ENCODE measurements at regions of chr19 and their contacts with region 1.

Region 1: DNA sequence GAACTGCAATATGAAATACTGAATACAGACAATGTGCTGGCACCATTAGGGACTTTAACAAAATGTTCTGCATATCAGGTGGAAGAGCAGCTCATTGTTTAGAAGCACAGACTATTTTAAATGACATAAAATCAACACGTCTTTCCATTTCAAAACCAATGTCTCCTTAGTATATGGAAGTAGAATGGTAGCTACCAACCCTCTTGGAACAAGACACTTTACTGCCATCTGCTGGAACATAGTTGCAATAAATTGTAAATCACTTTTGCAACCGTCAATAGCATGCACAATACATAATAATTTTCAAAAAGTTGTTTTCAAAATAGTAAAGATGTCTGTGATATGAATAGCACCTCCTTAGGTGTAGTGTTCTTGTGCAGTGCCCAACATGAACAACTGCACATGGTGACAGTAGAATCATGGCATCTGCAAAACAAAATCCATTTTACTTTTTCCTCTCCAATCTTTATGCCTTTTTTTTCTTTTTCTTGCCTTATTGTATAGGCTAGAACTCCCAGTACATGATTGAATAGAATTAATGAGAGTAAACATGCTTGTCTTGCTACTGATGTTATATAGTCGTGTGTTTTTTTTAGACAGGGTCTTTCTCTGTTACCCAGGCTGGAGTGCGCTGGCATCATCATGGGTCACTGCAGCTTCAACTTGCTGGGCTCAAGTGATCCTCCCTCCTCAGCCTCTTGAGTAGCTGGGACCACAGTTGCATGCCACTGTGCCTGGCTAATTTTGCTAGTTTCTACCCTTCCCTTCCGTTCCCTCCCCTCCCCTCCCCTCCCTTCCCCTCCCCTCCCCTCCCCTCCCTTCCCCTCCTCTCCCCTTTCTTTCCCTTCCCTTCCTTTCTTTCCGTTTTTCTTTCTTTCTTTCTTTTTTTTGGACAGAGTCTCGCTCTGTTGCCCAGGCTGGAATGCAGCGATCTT is 7.8 kb upstream of the LYPD5 start:
- DNase-seq: peak; percentile 74
- ATAC-seq: peak; percentile 85
- H3K4me3 ChIP-seq: no peak overlapping the region
- H3K27ac ChIP-seq: no peak overlapping the region
- H3K4me1 ChIP-seq: no peaks in the 10 kb centered on the region
- H3K27me3 ChIP-seq: peaks cover 10% of the 10 kb centered on the region
- CTCF ChIP-seq: peak; percentile 73
- POLR2A ChIP-seq: no peak
- RAD21 ChIP-seq: peak; percentile 75

Region 2: DNA sequence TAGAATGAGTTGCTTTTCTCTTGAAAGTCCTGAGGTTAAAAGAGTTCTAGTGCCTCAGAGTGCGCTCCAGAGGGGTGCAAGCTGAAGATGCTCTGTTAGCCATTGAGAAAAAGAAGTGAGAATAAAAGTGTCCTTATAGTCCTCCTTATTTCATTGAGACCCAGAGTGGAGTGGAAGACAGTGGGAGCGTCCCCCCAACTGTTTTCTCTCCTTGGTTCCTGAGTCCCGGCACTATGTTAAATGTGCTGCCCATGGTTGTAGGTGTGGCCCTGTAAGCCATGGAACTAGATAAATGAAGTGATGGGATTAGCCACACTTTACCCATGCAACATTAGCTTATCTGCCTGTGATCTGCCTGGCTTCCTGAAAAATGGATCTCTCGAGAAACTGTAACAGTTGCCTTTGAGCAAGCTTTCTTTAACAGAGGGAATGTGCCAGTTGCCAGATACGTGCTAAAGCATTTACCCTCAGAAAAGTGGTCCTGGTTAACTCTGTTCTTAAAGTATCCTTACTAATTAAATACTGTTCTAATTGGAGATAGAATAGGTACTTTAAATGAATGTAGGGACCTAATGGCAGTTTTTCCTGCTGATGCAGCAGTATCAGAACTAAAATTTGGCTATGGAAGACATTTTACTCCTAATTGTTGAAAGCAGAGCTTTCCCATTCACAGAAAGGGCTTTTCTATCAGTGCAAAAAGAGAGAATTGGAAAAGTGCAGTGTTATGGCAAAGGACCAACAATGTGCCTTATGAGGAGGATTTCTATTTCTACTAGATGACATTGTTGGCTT is 519.3 kb before region 1 on chr19:
- CTCF ChIA-PET with region 1: no interaction called
- POLR2A ChIA-PET with region 1: no interaction called
- dilution Hi-C with region 1: no loop called
- in situ Hi-C with region 1: no loop called
- intact Hi-C with region 1: loop called (anchors 5 kb)
- DNase-seq: no peak
- ATAC-seq: no peak
- H3K4me3 ChIP-seq: no peak overlapping the region
- H3K27ac ChIP-seq: no peak overlapping the region
- H3K4me1 ChIP-seq: no peaks in the 10 kb centered on the region
- H3K27me3 ChIP-seq: no peaks in the 10 kb centered on the region
- CTCF ChIP-seq: no peak
- POLR2A ChIP-seq: no peak
- RAD21 ChIP-seq: no peak

Region 3: GRCh38 chr19:43533546-43534304 is 276.3 kb before region 1 on chr19:
- CTCF ChIA-PET with region 1: no interaction called
- POLR2A ChIA-PET with region 1: no interaction called
- dilution Hi-C with region 1: no loop called
- in situ Hi-C with region 1: no loop called
- intact Hi-C with region 1: loop called (anchors 5 kb)
- DNase-seq: peak; percentile 99
- ATAC-seq: peak; percentile 91
- H3K4me3 ChIP-seq: peak overlapping the region; percentile 55
- H3K27ac ChIP-seq: peak overlapping the region; percentile 42
- H3K4me1 ChIP-seq: peaks cover 3% of the 10 kb centered on the region; the same call in 1 of the 2 replicates
- H3K27me3 ChIP-seq: no peaks in the 10 kb centered on the region
- CTCF ChIP-seq: no peak
- POLR2A ChIP-seq: no peak
- RAD21 ChIP-seq: no peak

Region 4: GRCh38 chr19:43743022-43743421 is 67.0 kb before region 1 on chr19:
- CTCF ChIA-PET with region 1: no interaction called
- POLR2A ChIA-PET with region 1: no interaction called
- dilution Hi-C with region 1: no loop called
- in situ Hi-C with region 1: no loop called
- intact Hi-C with region 1: loop called (anchors 1 kb)
- DNase-seq: peak; percentile 57
- ATAC-seq: peak; percentile 65
- H3K4me3 ChIP-seq: no peak overlapping the region
- H3K27ac ChIP-seq: no peak overlapping the region
- H3K4me1 ChIP-seq: 0 out of 2 replicates have a peak, but pooled peaks cover 1% of the 10 kb centered on the region
- H3K27me3 ChIP-seq: no peaks in the 10 kb centered on the region
- CTCF ChIP-seq: no peak
- POLR2A ChIP-seq: no peak
- RAD21 ChIP-seq: no peak

Measured in IMR-90 (cell line).